Sigmoid colon (tissue), 7 donors: ENCODE measurements at regions of chr2 and their contacts with region 1.

Region 1: DNA sequence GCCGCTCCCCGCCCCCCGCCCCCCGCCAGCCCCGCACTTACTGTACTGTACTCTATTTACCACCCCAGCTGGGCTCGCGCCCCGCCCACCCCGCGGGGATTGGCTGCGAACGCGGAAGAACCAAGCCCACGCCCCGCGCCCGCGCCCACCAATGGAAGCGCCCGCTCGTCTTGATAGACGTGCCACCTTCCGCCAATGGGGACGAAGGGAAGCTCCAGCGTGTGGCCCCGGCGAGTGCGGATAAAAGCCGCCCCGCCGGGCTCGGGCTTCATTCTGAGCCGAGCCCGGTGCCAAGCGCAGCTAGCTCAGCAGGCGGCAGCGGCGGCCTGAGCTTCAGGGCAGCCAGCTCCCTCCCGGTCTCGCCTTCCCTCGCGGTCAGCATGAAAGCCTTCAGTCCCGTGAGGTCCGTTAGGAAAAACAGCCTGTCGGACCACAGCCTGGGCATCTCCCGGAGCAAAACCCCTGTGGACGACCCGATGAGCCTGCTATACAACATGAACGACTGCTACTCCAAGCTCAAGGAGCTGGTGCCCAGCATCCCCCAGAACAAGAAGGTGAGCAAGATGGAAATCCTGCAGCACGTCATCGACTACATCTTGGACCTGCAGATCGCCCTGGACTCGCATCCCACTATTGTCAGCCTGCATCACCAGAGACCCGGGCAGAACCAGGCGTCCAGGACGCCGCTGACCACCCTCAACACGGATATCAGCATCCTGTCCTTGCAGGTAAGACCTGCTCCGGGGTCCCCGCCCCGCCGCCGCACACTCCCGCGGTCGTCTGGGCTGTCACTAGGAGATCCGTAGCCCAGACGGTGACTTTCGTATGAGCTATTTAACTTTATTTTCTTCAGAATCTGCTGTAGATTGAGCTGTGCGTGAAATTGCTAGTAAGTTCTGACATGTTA is at the start of gene ID2:
- DNase-seq: peak; percentile 100
- H3K4me3 ChIP-seq: peak within 1 kb of the TSS; percentile 70 to 96 (median 86)
- H3K27ac ChIP-seq: peak within 1 kb of the TSS; percentile 90 to 99 (median 98)
- H3K4me1 ChIP-seq: peaks cover 0 to 49% (median 33%) of the 10 kb centered on the region in 4 donors
- H3K27me3 ChIP-seq: no peaks in the 10 kb centered on the region
- CTCF ChIP-seq: no peak
- EP300 ChIP-seq: no peak
- POLR2A ChIP-seq: peak; percentile 99 to 100
- total RNA-seq, gene ID2: 376 to 615 (median 527) TPM

Region 2: DNA sequence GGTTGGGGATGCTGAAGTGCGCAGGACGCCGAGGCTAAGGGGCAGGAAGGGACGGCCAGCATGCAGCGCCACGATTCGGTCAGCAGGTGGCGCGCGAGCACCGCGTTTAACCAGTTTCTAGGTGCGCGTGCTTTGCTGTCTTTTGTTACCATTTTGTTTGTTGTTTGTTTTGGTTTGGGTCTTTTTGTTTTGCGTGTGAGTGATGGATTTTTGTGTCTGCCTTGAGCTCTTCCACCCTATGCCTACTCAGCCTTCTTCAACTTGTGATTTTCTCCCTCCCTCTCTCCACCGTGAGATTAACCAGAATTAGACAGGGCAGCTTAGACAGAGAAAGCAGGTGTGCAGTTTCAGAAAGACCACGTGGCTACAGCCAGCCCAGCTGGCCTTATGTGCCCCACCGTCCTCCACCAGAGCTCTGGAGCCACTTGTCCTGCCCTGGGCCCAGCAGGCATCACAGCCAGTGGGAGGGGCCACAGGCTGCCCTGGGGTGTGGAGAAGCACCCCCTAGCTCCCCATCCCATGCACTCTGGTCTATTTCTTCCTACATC is 1584.6 kb before region 1 on chr2:
- intact Hi-C with region 1: loop called (anchors 5 kb)
- DNase-seq: peak; percentile 80
- H3K4me3 ChIP-seq: peak overlapping the region in 2 of 4 donors; percentile 22 to 23
- H3K27ac ChIP-seq: no peak overlapping the region
- H3K4me1 ChIP-seq: peaks cover 0 to 11% (median 6%) of the 10 kb centered on the region in 4 donors
- H3K27me3 ChIP-seq: no peaks in the 10 kb centered on the region
- CTCF ChIP-seq: peak; percentile 90 to 97 (median 94)
- EP300 ChIP-seq: no peak
- POLR2A ChIP-seq: no peak

Region 3: GRCh38 chr2:7427293-7428060 is 1254.6 kb before region 1 on chr2:
- intact Hi-C with region 1: loop called (anchors 2 kb)
- DNase-seq: no peak
- H3K4me3 ChIP-seq: no peak overlapping the region
- H3K27ac ChIP-seq: no peak overlapping the region
- H3K4me1 ChIP-seq: peaks cover 0 to 42% (median 17%) of the 10 kb centered on the region in 4 donors
- H3K27me3 ChIP-seq: no peaks in the 10 kb centered on the region
- CTCF ChIP-seq: peak; percentile 49 to 71 (median 62)
- EP300 ChIP-seq: no peak
- POLR2A ChIP-seq: no peak

Region 4: DNA sequence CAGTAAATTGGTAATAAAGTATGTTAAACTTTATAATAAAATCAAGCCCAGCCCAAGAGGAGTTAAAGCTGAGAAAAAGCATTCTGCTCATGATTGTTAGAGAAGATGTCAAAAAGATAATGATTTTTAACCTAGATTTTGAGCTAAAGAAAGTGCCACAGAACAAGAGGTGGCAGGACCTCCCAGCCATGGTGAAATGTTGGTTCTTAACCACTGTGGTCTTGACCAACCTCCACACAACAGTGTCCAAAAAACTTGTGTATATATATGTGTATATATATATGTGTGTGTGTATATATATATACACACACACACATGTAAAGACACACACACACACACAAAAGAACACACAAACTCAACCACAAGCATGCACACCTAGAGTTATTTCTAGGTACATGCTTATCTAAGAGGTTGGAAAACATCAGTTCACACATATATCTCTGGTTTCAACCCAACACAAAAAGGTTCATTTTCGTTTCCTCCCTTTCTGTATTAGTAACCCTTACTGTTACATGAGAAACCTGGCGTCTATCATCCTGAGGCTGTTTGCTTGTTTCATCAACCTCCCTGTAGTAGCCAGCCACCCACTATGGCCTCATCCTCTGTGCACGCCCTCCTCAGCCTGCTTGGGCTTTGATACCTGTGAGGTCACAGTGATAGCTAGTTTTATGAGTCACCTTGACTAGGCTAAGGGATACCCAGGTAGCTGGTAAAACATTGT is 632.0 kb before region 1 on chr2:
- intact Hi-C with region 1: no loop called
- DNase-seq: no peak
- H3K4me3 ChIP-seq: no peak overlapping the region
- H3K27ac ChIP-seq: no peak overlapping the region
- H3K4me1 ChIP-seq: peaks cover 0 to 9% (median 7%) of the 10 kb centered on the region in 4 donors
- H3K27me3 ChIP-seq: no peaks in the 10 kb centered on the region
- CTCF ChIP-seq: no peak
- EP300 ChIP-seq: no peak
- POLR2A ChIP-seq: no peak

Region 5: DNA sequence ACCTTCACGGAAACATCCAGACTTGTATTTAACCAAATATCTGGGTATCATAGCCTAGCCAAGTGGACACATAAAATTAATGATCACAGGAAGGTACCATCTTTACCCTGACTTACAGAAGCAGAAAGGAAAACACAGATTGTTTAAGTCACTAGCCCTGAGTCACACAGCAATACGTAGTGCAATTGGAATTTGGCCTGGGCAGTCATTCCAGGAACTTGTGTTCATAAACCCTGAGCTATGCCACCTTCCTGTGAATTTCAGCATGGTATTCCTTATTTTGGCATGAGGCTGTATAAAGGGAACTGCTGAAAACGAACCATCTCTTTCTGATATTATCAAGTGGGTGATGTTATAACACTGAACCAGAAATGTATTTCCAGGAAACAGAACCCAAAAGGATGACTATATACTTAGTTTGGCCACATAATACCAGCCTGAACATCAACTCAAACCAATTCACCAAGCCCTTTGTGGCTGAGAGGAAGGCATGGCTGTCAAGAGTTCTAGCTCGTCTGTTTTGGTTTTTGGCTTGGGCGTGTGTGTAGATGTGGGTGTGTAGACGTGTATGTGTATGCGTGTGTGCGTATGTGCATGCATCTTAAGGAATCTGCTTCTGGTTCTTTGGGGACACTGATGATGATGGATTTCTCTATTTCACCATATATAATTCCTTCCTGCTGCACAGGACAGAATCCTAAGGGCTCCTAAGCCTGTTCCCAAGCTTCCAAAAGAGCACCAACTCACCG is 533.6 kb before region 1 on chr2:
- intact Hi-C with region 1: loop called (anchors 5 kb)
- DNase-seq: no peak
- H3K4me3 ChIP-seq: no peak overlapping the region
- H3K27ac ChIP-seq: peak overlapping the region in 3 of 4 donors; percentile 70 to 82 (median 81)
- H3K4me1 ChIP-seq: peaks cover 0 to 57% (median 51%) of the 10 kb centered on the region in 4 donors
- H3K27me3 ChIP-seq: no peaks in the 10 kb centered on the region
- CTCF ChIP-seq: no peak
- EP300 ChIP-seq: no peak
- POLR2A ChIP-seq: no peak

Region 6: GRCh38 chr2:8229546-8229986 is 452.5 kb before region 1 on chr2:
- intact Hi-C with region 1: loop called (anchors 5 kb)
- DNase-seq: peak; percentile 88
- H3K4me3 ChIP-seq: no peak overlapping the region
- H3K27ac ChIP-seq: peak overlapping the region; percentile 23 to 51 (median 34)
- H3K4me1 ChIP-seq: peaks cover 0 to 15% (median 11%) of the 10 kb centered on the region in 4 donors
- H3K27me3 ChIP-seq: no peaks in the 10 kb centered on the region
- CTCF ChIP-seq: peak in 2 of 4 experiments; percentile 10 to 19
- EP300 ChIP-seq: no peak
- POLR2A ChIP-seq: no peak

Region 7: GRCh38 chr2:8456846-8457481 is 225.1 kb before region 1 on chr2:
- intact Hi-C with region 1: no loop called
- DNase-seq: peak; percentile 53
- H3K4me3 ChIP-seq: peak overlapping the region in 1 of 4 donors; percentile 18
- H3K27ac ChIP-seq: no peak overlapping the region
- H3K4me1 ChIP-seq: peaks cover 0 to 8% (median 3%) of the 10 kb centered on the region in 4 donors
- H3K27me3 ChIP-seq: peaks cover 3 to 27% (median 11%) of the 10 kb centered on the region in 3 donors
- CTCF ChIP-seq: no peak
- EP300 ChIP-seq: no peak
- POLR2A ChIP-seq: no peak

Region 8: DNA sequence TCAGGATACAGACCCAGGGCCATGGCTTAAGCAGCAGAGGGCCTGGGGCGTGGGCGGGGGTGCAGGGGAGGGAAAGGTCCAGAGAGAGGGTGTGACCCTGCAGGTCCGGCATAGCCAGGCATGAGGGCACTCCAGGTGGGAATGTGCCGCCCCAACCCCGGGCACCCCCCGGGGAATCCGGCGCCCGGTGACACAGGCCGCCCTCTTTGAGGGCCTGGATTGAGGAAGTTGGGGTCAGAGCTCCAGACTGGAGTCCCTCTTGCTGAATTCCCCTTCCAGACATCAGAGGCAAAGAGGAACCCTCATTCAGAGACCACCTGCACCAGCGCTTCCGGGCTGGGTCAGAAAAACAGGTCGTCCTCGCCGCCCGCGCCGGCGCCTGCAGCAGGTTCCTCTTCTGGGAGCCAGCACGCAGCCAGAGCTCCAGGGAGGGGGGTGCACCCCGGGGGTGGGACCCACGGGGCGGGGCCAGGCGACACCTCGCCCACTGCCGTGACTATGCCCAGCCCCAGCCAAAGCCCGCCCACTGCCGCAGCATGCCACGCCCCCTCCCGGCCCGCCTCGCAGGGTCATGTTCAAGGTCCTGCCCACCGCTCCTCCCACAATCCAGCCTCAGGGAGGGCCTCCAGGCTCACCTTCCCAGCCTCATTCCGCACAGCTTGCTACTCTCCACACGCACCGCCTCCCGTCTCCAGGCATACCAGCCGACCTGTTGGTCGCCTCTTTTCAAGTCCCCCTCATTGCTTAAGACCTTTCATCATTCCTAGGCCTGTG is 98.5 kb before region 1 on chr2:
- intact Hi-C with region 1: loop called (anchors 5 kb)
- DNase-seq: peak; percentile 98
- H3K4me3 ChIP-seq: peak overlapping the region in 3 of 4 donors; percentile 21 to 32 (median 25)
- H3K27ac ChIP-seq: peak overlapping the region; percentile 60 to 80 (median 68)
- H3K4me1 ChIP-seq: peaks cover 0 to 18% (median 16%) of the 10 kb centered on the region in 4 donors
- H3K27me3 ChIP-seq: no peaks in the 10 kb centered on the region
- CTCF ChIP-seq: no peak
- EP300 ChIP-seq: no peak
- POLR2A ChIP-seq: peak in 1 of 2 donors; percentile 4